Prostate gland (tissue), 2 donors: ENCODE measurements at regions of chr6 and their contacts with region 1.

Region 1: GRCh38 chr6:110039364-110039980 is 61.4 kb downstream of the GPR6 start:
- DNase-seq: peak; percentile 80
- H3K4me3 ChIP-seq: peak overlapping the region in 1 of 2 donors; percentile 22
- H3K27ac ChIP-seq: no peak overlapping the region
- H3K4me1 ChIP-seq: no peaks in the 10 kb centered on the region
- H3K27me3 ChIP-seq: no peaks in the 10 kb centered on the region
- CTCF ChIP-seq: peak; percentile 72 to 91 (median 84)
- POLR2A ChIP-seq: no peak

Region 2: GRCh38 chr6:109526905-109527628 is 512.4 kb before region 1 on chr6:
- intact Hi-C with region 1: loop called (anchors 5 kb)
- DNase-seq: peak; percentile 60
- H3K4me3 ChIP-seq: no peak overlapping the region
- H3K27ac ChIP-seq: no peak overlapping the region
- H3K4me1 ChIP-seq: no peaks in the 10 kb centered on the region
- H3K27me3 ChIP-seq: no peaks in the 10 kb centered on the region
- CTCF ChIP-seq: peak in 3 of 4 experiments; percentile 42 to 52 (median 44)
- POLR2A ChIP-seq: no peak

Region 3: DNA sequence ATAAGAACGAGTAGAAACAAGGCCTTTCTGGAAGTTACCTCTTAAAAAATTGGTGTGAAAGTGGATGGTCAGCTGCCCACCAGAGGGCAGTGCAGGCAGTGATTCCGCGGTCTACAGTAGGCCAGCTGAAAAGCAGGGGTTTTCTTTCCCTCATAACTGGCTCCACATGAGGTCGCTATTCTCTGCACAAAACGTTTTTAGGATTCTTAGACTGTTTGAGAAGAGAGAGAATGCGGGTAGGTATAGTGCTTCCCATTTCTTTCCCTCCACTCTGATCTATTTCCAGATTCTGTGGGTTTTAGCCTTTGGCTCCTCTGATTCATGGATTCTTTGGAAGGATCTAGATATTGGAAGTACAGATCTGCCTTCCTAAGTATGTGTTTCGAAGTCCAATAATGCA is 334.2 kb before region 1 on chr6:
- intact Hi-C with region 1: loop called (anchors 1 kb)
- DNase-seq: peak; percentile 72
- H3K4me3 ChIP-seq: no peak overlapping the region
- H3K27ac ChIP-seq: no peak overlapping the region
- H3K4me1 ChIP-seq: no peaks in the 10 kb centered on the region
- H3K27me3 ChIP-seq: no peaks in the 10 kb centered on the region
- CTCF ChIP-seq: peak; percentile 91 to 98 (median 97)
- POLR2A ChIP-seq: no peak

Region 4: GRCh38 chr6:109892436-109893435 is 146.7 kb before region 1 on chr6:
- intact Hi-C with region 1: no loop called
- DNase-seq: peak; percentile 38
- H3K4me3 ChIP-seq: no peak overlapping the region
- H3K27ac ChIP-seq: peak overlapping the region in 1 of 2 donors; percentile 18
- H3K4me1 ChIP-seq: peaks cover 2% of the 10 kb centered on the region
- H3K27me3 ChIP-seq: no peaks in the 10 kb centered on the region
- CTCF ChIP-seq: peak in 2 of 4 experiments; percentile 13 to 20
- POLR2A ChIP-seq: no peak

Region 5: DNA sequence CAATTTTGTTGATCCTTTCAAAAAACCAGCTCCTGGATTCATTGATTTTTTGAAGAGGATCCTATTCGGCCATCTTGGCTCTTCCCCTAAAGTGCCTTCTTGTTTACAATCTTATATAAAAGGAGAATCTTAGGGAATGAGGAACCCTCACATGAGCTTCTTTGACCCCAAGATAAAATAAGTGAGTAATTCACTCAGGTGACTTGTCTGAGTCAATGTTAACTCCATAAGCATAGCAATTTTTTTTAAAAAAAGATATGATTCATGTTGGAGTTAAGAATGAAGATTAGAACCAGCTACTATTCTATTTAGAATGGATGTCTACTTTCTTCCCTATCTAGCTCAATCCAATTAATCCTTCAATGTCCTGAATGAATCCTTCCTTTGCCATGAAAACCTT is 119.0 kb after region 1 on chr6:
- intact Hi-C with region 1: no loop called
- DNase-seq: no peak
- H3K4me3 ChIP-seq: no peak overlapping the region
- H3K27ac ChIP-seq: no peak overlapping the region
- H3K4me1 ChIP-seq: no peaks in the 10 kb centered on the region
- H3K27me3 ChIP-seq: no peaks in the 10 kb centered on the region
- CTCF ChIP-seq: no peak
- POLR2A ChIP-seq: no peak

Region 6: GRCh38 chr6:110398778-110399177 is 359.3 kb after region 1 on chr6:
- intact Hi-C with region 1: loop called (anchors 10 kb)
- DNase-seq: no peak
- H3K4me3 ChIP-seq: no peak overlapping the region
- H3K27ac ChIP-seq: no peak overlapping the region
- H3K4me1 ChIP-seq: no peaks in the 10 kb centered on the region
- H3K27me3 ChIP-seq: no peaks in the 10 kb centered on the region
- CTCF ChIP-seq: no peak
- POLR2A ChIP-seq: no peak